ENCODE measurements at regions of chr17 and their contacts with region 1.

Region 1: DNA sequence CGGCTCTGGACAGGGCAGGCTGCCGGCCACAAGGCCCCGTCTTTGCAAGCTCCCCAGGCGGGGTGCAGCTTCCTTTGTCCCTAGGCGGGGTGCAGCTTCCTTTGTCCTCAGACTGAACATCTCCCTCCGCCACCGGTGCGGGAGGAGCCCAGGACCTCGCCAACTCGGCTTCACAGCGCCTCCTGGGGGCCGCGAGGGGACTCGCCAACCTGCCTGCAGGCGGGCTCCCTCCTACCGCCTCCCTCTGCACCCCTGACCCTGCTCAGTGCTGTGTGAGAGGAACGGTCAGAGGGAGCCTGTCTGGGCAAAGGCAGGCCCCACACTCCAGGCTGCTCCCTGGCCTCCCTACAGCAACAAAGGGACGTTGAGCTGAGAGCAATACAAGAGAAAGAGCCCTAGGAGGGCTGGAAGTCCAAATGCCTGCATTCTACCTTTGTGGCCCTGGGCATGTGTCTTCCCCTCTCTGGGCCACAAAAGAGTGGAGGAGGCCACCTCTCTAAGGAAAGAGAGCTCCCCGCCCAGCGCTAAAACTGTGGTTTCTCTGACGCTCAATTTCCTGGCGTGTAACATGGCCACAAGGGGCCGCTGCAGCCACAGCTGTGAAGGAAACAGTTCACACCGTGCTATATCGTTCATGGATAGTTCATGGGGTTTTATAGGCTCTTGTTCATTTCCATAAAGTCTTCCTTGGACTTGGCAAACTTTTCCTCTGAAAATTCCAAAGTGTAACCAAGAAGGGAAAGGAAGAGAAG is 20.9 kb upstream of the KRT19 start:
- DNase-seq: peak; percentile 93
- ATAC-seq: peak; percentile 81
- H3K4me3 Mint-ChIP-seq: no peak overlapping the region
- H3K27ac Mint-ChIP-seq: peak overlapping the region; percentile 42
- H3K4me1 Mint-ChIP-seq: peaks cover 22% of the 10 kb centered on the region
- H3K27me3 Mint-ChIP-seq: peaks cover 10% of the 10 kb centered on the region

Region 2: DNA sequence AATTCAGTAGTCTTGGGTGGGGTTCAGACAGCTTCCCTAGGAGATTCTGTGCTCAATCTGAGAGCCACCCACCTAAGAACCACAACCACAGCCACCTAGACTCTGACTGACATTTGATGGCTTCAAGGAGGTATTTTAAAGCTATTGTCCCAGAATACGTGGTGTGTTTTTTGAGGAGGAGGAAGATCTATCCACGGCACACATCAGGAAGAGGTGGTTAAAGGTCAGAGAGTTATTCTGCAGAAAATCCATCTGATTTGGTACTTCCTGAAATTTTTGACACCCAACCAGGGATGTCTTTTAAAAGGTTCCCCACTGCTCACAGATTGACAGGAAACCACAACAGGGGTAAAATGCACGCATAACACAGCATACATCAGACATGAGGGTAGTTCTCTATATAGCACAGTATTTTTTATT is 926.5 kb before region 1 on chr17:
- CTCF ChIA-PET with region 1: no interaction called
- POLR2A ChIA-PET with region 1: no interaction called
- intact Hi-C with region 1: loop called in 1 of 2 experiments (anchors 5 kb)
- DNase-seq: peak; percentile 41
- ATAC-seq: peak; percentile 25
- H3K4me3 Mint-ChIP-seq: no peak overlapping the region
- H3K27ac Mint-ChIP-seq: peak overlapping the region; percentile 77
- H3K4me1 Mint-ChIP-seq: peaks cover 61% of the 10 kb centered on the region
- H3K27me3 Mint-ChIP-seq: no peaks in the 10 kb centered on the region

Region 3: DNA sequence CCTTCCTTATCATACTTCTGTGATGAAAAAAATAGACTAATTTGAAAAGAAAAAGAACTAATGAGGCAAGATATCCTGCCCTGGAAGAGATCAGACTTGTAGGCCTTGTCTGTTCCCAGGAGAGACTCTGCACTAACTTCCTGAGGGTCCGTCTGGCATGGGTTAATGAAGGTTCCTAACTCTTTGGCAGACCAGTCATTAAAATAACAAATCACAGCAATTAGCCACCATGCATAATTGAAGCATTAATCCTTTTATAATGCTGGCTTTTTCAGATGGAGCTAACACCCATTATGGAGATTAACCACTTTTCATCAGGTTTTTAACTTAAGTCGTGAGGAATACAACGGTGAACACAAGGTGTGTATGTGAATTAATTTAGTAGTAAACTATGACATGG is 716.2 kb before region 1 on chr17:
- CTCF ChIA-PET with region 1: no interaction called
- POLR2A ChIA-PET with region 1: no interaction called
- intact Hi-C with region 1: no loop called
- DNase-seq: no peak
- ATAC-seq: no peak
- H3K4me3 Mint-ChIP-seq: no peak overlapping the region
- H3K27ac Mint-ChIP-seq: no peak overlapping the region
- H3K4me1 Mint-ChIP-seq: peaks cover 6% of the 10 kb centered on the region
- H3K27me3 Mint-ChIP-seq: no peaks in the 10 kb centered on the region

Region 4: DNA sequence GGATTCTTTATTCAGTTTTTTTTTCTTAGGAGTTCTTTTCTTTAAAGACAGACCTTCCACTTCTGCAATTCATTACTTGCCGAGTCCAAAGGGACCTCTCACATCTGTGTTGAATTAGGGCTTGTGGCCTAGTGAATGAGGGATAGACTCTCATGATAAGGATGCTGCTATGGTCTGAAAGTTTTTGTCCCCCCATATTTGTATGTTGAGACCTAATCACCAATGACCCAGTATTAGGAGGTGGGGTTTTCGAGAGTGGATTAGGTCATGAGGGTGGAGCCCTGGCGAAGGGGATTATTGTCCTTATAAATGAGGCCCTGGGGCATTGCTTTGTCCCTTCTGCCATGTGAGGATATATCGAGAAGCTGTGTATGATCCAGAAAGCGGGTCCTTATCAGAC is 691.5 kb before region 1 on chr17:
- CTCF ChIA-PET with region 1: interaction called, 13 read pairs
- POLR2A ChIA-PET with region 1: no interaction called
- intact Hi-C with region 1: loop called in 1 of 2 experiments (anchors 2 kb)
- DNase-seq: no peak
- ATAC-seq: no peak
- H3K4me3 Mint-ChIP-seq: no peak overlapping the region
- H3K27ac Mint-ChIP-seq: no peak overlapping the region
- H3K4me1 Mint-ChIP-seq: no peaks in the 10 kb centered on the region
- H3K27me3 Mint-ChIP-seq: peaks cover 14% of the 10 kb centered on the region

Region 5: DNA sequence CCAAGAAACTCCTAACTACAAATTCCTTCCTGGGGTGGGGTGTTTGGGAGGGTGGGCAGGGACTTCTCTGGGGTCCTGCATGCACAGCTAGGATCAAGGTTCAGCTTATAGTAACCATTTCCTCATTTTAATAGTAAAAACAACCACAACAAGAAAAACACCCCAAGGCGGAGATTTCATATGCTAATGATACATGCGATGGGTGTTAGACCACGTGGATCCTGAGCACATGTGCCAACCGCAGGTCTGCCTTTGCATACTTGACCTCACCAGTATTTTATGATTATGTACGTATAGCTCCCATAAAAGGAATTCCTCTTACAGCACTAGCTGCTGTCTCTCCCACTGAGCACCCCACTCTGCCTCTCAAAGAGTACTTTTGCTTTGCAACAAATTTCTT is 432.7 kb before region 1 on chr17:
- CTCF ChIA-PET with region 1: no interaction called
- POLR2A ChIA-PET with region 1: no interaction called
- intact Hi-C with region 1: no loop called
- DNase-seq: no peak
- ATAC-seq: no peak
- H3K4me3 Mint-ChIP-seq: no peak overlapping the region
- H3K27ac Mint-ChIP-seq: no peak overlapping the region
- H3K4me1 Mint-ChIP-seq: peaks cover 22% of the 10 kb centered on the region
- H3K27me3 Mint-ChIP-seq: peaks cover 3% of the 10 kb centered on the region

Region 6: GRCh38 chr17:41403798-41404671 is 145.0 kb before region 1 on chr17:
- CTCF ChIA-PET with region 1: interaction called, 21 read pairs
- POLR2A ChIA-PET with region 1: interaction called, 3 read pairs
- intact Hi-C with region 1: loop called in 1 of 2 experiments (anchors 2 kb)
- DNase-seq: peak; percentile 80
- ATAC-seq: peak; percentile 91
- H3K4me3 Mint-ChIP-seq: peak overlapping the region; percentile 10
- H3K27ac Mint-ChIP-seq: peak overlapping the region; percentile 87
- H3K4me1 Mint-ChIP-seq: peaks cover 37% of the 10 kb centered on the region
- H3K27me3 Mint-ChIP-seq: peaks cover 2% of the 10 kb centered on the region

Region 7: GRCh38 chr17:41535764-41536481 is 13.1 kb before region 1 on chr17:
- CTCF ChIA-PET with region 1: interaction called, 20 read pairs
- POLR2A ChIA-PET with region 1: no interaction called
- intact Hi-C with region 1: no loop called
- DNase-seq: no peak
- ATAC-seq: no peak
- H3K4me3 Mint-ChIP-seq: no peak overlapping the region
- H3K27ac Mint-ChIP-seq: no peak overlapping the region
- H3K4me1 Mint-ChIP-seq: no peaks in the 10 kb centered on the region
- H3K27me3 Mint-ChIP-seq: peaks cover 5% of the 10 kb centered on the region

Region 8: DNA sequence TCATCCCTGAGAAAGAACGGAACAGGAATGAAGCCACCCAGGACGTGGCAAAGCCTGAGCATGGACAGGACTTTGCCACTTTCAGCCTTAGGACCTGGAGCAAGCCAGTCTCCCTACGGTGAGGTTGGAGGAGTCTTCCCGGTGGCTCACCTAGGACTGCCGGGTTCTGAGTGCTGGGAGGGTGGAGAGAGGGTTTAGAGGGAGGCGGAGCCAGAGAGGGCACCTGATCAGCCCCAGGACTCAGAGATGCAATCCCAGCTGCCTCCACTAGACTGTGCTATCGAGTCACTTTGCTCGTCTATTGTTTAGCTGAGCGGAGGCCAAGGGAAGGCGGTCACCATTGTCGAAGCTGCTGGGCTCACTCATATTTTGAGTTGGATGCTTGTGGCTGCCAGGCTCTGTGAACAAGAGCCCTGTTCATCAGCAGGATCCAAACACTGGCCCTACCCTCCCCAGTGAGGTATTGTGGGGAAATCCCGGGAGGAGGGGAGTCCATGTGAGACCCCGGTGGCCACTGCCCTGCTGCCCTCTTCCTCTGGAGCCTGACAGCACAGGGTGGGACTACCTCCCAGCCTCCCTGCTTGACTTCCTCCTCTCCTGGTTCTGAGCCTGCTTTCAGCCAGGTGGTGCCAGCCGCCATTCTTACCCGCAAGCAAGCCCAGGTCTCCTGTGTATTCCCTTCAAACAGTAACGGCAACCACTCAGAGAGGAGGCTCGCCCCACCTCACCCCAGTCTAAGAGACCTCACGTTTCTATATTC is 30.6 kb after region 1 on chr17:
- CTCF ChIA-PET with region 1: interaction called, 23 read pairs
- POLR2A ChIA-PET with region 1: interaction called, 6 read pairs
- intact Hi-C with region 1: loop called in 1 of 2 experiments (anchors 1 kb)
- DNase-seq: peak; percentile 89
- ATAC-seq: peak; percentile 99
- H3K4me3 Mint-ChIP-seq: no peak overlapping the region
- H3K27ac Mint-ChIP-seq: no peak overlapping the region
- H3K4me1 Mint-ChIP-seq: no peaks in the 10 kb centered on the region
- H3K27me3 Mint-ChIP-seq: peaks cover 20% of the 10 kb centered on the region

Region 9: GRCh38 chr17:41678907-41679739 is 130.1 kb after region 1 on chr17:
- CTCF ChIA-PET with region 1: interaction called, 11 read pairs
- POLR2A ChIA-PET with region 1: no interaction called
- intact Hi-C with region 1: no loop called
- DNase-seq: peak; percentile 79
- ATAC-seq: peak; percentile 91
- H3K4me3 Mint-ChIP-seq: peak overlapping the region; percentile 72
- H3K27ac Mint-ChIP-seq: peak overlapping the region; percentile 94
- H3K4me1 Mint-ChIP-seq: peaks cover 32% of the 10 kb centered on the region
- H3K27me3 Mint-ChIP-seq: no peaks in the 10 kb centered on the region